ENCODE measurements at regions of chr6 and their contacts with region 1.

Region 1: DNA sequence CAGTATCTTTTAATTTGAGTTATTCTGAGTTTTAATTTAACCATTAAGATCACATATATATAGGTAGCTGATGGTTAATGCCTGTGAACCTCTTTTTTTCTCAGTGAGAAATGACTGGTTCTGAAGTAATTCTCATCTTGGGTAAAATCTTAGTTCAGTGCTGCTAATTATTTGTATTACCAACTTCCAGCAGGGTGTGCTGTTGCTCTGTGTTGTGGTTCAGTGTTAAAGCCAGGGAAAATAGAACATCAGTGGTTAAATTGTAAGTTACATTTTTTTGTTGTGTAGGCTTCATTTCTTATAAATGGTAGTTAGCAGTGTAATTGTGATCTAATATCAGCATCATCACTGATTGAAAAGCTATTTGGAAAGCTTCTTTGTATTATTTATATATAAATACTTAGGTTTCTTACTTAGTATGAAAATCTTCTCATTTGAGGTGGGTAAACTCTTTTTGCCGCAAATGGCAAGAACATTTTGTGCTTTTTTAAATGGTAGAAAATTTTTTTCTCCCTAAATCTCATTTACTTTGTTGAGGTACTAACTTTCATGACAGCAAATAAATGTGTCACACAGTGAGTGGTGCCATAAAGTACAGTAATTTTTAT is 43.7 kb downstream of the CDC5L start:
- DNase-seq: peak in 9 of 14 experiments; percentile 6 to 67 (median 24)
- ATAC-seq: peak; percentile 68
- H3K4me3 ChIP-seq: no peak overlapping the region
- H3K4me3 Mint-ChIP-seq: no peak overlapping the region
- H3K27ac ChIP-seq: no peak overlapping the region
- H3K27ac Mint-ChIP-seq: no peak overlapping the region
- H3K4me1 ChIP-seq: no peaks in the 10 kb centered on the region
- H3K4me1 Mint-ChIP-seq: peaks cover 11% of the 10 kb centered on the region
- H3K27me3 ChIP-seq: no peaks in the 10 kb centered on the region
- H3K27me3 Mint-ChIP-seq: no peaks in the 10 kb centered on the region
- CTCF ChIP-seq: peak; percentile 71

Region 2: GRCh38 chr6:44456070-44456965 is 25.1 kb after region 1 on chr6:
- CTCF ChIA-PET with region 1: interaction called, 4 read pairs
- POLR2A ChIA-PET with region 1: no interaction called
- intact Hi-C with region 1: loop called in 1 of 2 experiments (anchors 1 kb)
- DNase-seq: peak in 11 of 14 experiments; percentile 6 to 72 (median 24)
- ATAC-seq: peak; percentile 75
- H3K4me3 ChIP-seq: no peak overlapping the region
- H3K4me3 Mint-ChIP-seq: no peak overlapping the region
- H3K27ac ChIP-seq: no peak overlapping the region
- H3K27ac Mint-ChIP-seq: no peak overlapping the region
- H3K4me1 ChIP-seq: no peaks in the 10 kb centered on the region
- H3K4me1 Mint-ChIP-seq: no peaks in the 10 kb centered on the region
- H3K27me3 ChIP-seq: peaks cover 0 to 2% of the 10 kb centered on the region in 2 experiments
- H3K27me3 Mint-ChIP-seq: no peaks in the 10 kb centered on the region
- CTCF ChIP-seq: peak; percentile 76

Region 3: DNA sequence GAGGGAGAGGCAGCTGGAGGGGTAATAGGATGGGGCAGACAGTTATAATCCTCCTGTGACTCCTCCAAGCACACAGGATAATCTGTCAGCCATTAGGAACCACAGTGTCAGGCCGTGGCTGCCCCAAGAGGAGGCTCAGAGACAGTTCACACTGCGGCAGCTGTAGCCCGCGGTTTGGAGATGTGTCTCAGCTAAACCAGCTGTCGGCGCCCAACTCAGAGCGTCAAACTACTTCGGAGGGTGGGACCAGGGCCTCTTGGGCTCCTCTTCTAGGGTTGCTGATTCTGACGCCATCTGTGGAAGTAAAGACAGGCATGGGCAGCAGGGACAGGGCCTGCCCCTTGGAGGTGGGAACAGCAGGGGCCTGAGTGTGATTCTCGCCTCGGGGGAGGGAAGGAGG is 266.1 kb after region 1 on chr6:
- CTCF ChIA-PET with region 1: no interaction called
- POLR2A ChIA-PET with region 1: no interaction called
- intact Hi-C with region 1: no loop called
- DNase-seq: peak in 1 of 14 experiments; percentile 3
- ATAC-seq: no peak
- H3K4me3 ChIP-seq: no peak overlapping the region
- H3K4me3 Mint-ChIP-seq: no peak overlapping the region
- H3K27ac ChIP-seq: no peak overlapping the region
- H3K27ac Mint-ChIP-seq: no peak overlapping the region
- H3K4me1 ChIP-seq: peaks cover 4% of the 10 kb centered on the region
- H3K4me1 Mint-ChIP-seq: no peaks in the 10 kb centered on the region
- H3K27me3 ChIP-seq: no peaks in the 10 kb centered on the region
- H3K27me3 Mint-ChIP-seq: no peaks in the 10 kb centered on the region
- CTCF ChIP-seq: no peak

Measured in CD4-positive, alpha-beta T cell (primary cell).